Activated B cell treated with CpG ODN at 0.5 μM for 24 hours (primary cell): ENCODE measurements at regions of chr17 and their contacts with region 1.

Region 1: DNA sequence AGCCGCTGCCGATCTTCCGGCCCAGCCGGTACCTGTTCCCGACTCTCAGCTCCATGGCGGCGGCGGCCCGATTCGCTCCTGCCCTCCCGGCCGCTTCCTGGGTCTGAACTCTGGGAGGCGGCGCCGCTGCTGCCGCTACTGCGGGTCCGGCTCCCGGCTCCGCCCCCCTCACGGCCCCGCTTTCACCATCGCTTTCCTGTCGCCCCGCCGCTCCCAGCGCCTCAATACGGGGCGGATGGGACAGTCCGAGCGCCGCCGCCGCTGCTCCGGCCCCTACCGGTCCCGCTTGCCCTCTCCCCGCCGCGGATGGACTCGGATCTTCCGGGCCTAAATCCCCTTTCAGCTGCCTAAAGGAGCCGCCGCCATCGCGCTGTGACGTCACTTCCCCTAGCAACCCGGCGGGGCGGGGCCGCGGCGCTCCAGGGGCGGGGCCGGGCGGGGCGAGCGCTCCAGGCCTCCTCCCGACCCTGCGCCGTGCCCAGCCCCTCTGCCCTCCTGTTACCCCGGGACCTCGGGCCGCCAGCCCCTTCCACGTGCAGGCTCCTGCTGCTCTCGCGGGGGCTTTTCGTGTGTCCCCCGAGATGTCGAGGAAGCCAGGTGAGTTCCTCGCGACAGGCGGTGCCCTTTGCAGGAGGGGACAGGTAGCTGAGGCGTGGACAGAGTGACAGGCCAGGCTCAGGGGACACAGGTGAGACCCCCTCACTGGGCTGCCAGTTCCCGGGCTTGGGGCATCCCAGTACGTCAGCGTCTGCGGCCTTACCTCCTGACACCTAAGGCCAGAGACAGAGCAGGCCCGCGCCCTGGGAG is at the start of gene CSNK1D:
- DNase-seq: peak; percentile 97
- ATAC-seq: peak; percentile 83
- H3K4me3 Mint-ChIP-seq: peak within 1 kb of the TSS; percentile 94
- H3K27ac Mint-ChIP-seq: peak within 1 kb of the TSS; percentile 97
- H3K4me1 Mint-ChIP-seq: peaks cover 45% of the 10 kb centered on the region
- H3K27me3 Mint-ChIP-seq: no peaks in the 10 kb centered on the region
- CTCF ChIP-seq: no peak
- total RNA-seq, gene CSNK1D: 147 and 170 TPM in 2 replicates

Region 2: DNA sequence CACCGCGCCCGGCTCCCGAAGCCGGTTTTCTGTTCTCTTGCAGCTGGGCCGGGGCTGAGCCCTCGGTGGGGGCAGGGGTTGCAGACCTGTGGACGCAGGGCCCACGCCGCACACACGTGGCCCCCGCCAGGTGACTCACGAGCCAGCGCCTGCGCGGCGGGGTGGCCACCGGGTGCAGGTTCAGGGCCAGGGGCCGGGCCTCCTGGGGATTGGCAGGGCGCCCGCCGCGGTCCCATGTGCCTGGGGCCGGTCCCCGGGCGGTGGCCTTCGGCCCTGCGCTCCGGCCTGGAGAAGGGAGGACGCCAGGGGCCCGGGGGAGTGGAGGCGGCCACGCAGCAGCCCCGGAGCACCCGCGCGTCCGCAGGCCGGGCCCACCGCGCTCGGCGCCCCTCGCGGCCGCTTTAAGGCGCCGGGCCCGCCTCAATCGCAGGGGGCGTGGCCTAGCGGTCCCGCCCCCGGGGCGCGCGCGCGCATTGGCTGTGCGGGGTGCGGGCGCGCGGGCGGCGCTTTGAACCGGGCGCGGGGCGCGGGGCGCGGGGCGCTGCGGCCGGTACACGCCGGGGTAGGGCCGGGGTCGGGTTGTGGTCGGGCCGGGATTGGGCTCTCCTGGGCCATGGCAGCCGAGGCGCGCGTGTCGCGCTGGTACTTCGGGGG is 561.6 kb before region 1 on chr17 and contains the start of gene SLC25A10:
- CTCF ChIA-PET with region 1: no interaction called
- POLR2A ChIA-PET with region 1: no interaction called
- intact Hi-C with region 1: loop called (anchors 5 kb)
- DNase-seq: peak; percentile 82
- ATAC-seq: peak; percentile 89
- H3K4me3 Mint-ChIP-seq: peak within 1 kb of the TSS; percentile 84
- H3K27ac Mint-ChIP-seq: peak within 1 kb of the TSS; percentile 19
- H3K4me1 Mint-ChIP-seq: peaks cover 17% of the 10 kb centered on the region
- H3K27me3 Mint-ChIP-seq: no peaks in the 10 kb centered on the region
- CTCF ChIP-seq: no peak
- total RNA-seq, gene SLC25A10: 6.1 and 6.4 TPM in 2 replicates

Region 3: DNA sequence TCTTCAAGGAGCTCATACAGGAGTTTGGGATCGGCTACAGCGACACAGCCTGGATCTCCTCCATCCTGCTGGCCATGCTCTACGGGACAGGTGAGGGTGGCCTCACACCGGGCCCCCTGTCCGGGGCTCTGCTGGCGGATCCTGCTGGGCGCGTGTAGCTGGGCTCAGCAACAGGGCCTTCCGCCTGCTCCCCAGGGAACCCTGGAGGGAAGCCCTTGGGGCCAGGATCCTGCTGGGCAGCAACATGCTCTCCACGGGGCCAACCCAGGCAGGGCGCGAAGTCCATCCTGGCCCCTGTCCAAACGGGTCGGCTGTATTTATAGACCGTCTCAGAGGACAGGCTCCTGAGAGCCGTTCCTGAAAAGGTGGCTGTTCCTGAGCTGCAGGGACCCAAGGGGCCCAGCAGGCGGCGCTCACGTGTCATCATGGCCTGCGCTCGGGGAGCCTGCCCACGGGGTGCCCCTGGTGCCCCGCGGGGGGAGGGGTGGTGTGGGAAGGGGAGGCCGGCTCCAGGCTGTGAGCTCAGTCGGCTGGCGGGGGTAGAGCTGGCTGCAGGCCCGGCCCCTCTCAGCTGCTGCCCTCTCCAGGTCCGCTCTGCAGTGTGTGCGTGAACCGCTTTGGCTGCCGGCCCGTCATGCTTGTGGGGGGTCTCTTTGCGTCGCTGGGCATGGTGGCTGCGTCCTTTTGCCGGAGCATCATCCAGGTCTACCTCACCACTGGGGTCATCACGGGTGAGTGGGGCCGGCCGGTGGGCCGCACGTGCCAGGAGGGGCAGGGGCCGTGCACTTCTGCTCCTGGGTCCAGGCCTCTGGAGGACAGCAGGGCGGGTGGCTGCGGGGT is 37.2 kb before region 1 on chr17:
- CTCF ChIA-PET with region 1: no interaction called
- POLR2A ChIA-PET with region 1: interaction called, 3 read pairs
- intact Hi-C with region 1: loop called (anchors 5 kb)
- DNase-seq: peak; percentile 58
- ATAC-seq: peak; percentile 64
- H3K4me3 Mint-ChIP-seq: no peak overlapping the region
- H3K27ac Mint-ChIP-seq: no peak overlapping the region
- H3K4me1 Mint-ChIP-seq: peaks cover 53% of the 10 kb centered on the region
- H3K27me3 Mint-ChIP-seq: no peaks in the 10 kb centered on the region
- CTCF ChIP-seq: no peak